Caco-2 (cell line): ENCODE measurements at regions of chr22 and their contacts with region 1.

Region 1: DNA sequence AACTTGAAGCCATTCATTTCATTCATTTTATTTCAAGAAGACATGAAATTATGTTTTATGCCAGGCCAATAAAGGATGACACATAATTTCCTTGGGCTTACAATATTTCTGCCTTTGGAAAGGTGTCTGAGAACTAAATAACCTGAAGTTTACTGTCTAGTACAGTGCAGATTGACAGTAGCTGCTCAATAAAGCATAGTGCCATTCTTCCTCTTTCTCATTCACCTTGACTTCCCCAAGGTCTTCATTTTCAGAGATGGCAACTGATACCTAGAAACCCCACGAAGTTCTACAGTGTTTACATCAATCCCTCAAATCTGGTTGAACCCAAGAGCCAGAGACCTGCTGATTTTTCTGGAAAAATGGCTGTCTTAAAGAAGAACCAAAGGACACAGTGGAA is 144.3 kb upstream of the SYN3 start:
- DNase-seq: no peak
- H3K4me3 ChIP-seq: no peak overlapping the region
- H3K4me3 Mint-ChIP-seq: no peak overlapping the region
- H3K27ac Mint-ChIP-seq: no peak overlapping the region
- H3K4me1 ChIP-seq: no peaks in the 10 kb centered on the region
- H3K4me1 Mint-ChIP-seq: no peaks in the 10 kb centered on the region
- H3K27me3 ChIP-seq: no peaks in the 10 kb centered on the region
- H3K27me3 Mint-ChIP-seq: peaks cover 11% of the 10 kb centered on the region
- CTCF ChIP-seq: no peak

Region 2: GRCh38 chr22:33018232-33018864 is 184.1 kb before region 1 on chr22:
- CTCF ChIA-PET with region 1: interaction called, 7 read pairs
- POLR2A ChIA-PET with region 1: interaction called, 4 read pairs
- intact Hi-C with region 1: loop called (anchors 1 kb)
- DNase-seq: peak; percentile 60 to 80
- H3K4me3 ChIP-seq: no peak overlapping the region
- H3K4me3 Mint-ChIP-seq: no peak overlapping the region
- H3K27ac Mint-ChIP-seq: no peak overlapping the region
- H3K4me1 ChIP-seq: no peaks in the 10 kb centered on the region
- H3K4me1 Mint-ChIP-seq: no peaks in the 10 kb centered on the region
- H3K27me3 ChIP-seq: no peaks in the 10 kb centered on the region; the same call in 1 of the 2 replicates
- H3K27me3 Mint-ChIP-seq: peaks cover 4% of the 10 kb centered on the region
- CTCF ChIP-seq: peak; percentile 88 to 92

Region 3: GRCh38 chr22:33083212-33083611 is 119.2 kb before region 1 on chr22:
- CTCF ChIA-PET with region 1: no interaction called
- POLR2A ChIA-PET with region 1: no interaction called
- intact Hi-C with region 1: loop called (anchors 1 kb)
- DNase-seq: no peak
- H3K4me3 ChIP-seq: no peak overlapping the region
- H3K4me3 Mint-ChIP-seq: no peak overlapping the region
- H3K27ac Mint-ChIP-seq: no peak overlapping the region
- H3K4me1 ChIP-seq: no peaks in the 10 kb centered on the region
- H3K4me1 Mint-ChIP-seq: no peaks in the 10 kb centered on the region
- H3K27me3 ChIP-seq: no peaks in the 10 kb centered on the region
- H3K27me3 Mint-ChIP-seq: no peaks in the 10 kb centered on the region
- CTCF ChIP-seq: no peak

Region 4: GRCh38 chr22:33126881-33127280 is 75.6 kb before region 1 on chr22:
- CTCF ChIA-PET with region 1: no interaction called
- POLR2A ChIA-PET with region 1: no interaction called
- intact Hi-C with region 1: loop called (anchors 1 kb)
- DNase-seq: peak in 1 of 2 experiments; percentile 12
- H3K4me3 ChIP-seq: no peak overlapping the region
- H3K4me3 Mint-ChIP-seq: no peak overlapping the region
- H3K27ac Mint-ChIP-seq: no peak overlapping the region
- H3K4me1 ChIP-seq: no peaks in the 10 kb centered on the region
- H3K4me1 Mint-ChIP-seq: no peaks in the 10 kb centered on the region
- H3K27me3 ChIP-seq: no peaks in the 10 kb centered on the region
- H3K27me3 Mint-ChIP-seq: peaks cover 16% of the 10 kb centered on the region
- CTCF ChIP-seq: peak in 1 of 2 experiments; percentile 18

Region 5: DNA sequence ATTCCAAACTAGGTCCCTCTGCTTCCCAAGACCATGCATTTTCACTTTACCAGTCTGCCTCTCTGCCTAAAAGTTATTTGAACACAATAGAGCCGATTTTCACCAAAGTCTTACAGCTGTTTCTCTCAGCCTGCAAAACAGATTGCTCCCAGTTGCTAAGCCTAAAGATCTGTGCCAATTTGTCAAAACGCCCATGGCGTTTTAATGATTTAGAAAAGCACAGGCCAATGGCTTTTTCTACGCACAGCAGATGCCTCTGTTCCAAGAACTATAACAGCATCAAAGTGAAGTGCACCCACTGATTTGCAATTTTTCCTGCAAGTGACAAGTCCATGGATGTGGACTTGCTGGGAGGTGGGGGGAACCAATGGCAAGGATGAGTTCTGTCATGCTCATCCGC is 29.6 kb after region 1 on chr22:
- CTCF ChIA-PET with region 1: no interaction called
- POLR2A ChIA-PET with region 1: no interaction called
- intact Hi-C with region 1: no loop called
- DNase-seq: no peak
- H3K4me3 ChIP-seq: no peak overlapping the region
- H3K4me3 Mint-ChIP-seq: no peak overlapping the region
- H3K27ac Mint-ChIP-seq: no peak overlapping the region
- H3K4me1 ChIP-seq: no peaks in the 10 kb centered on the region
- H3K4me1 Mint-ChIP-seq: no peaks in the 10 kb centered on the region
- H3K27me3 ChIP-seq: no peaks in the 10 kb centered on the region
- H3K27me3 Mint-ChIP-seq: peaks cover 3% of the 10 kb centered on the region
- CTCF ChIP-seq: no peak